CD14-positive monocyte (primary cell): ENCODE measurements at regions of chr10 and their contacts with region 1.

Region 1: DNA sequence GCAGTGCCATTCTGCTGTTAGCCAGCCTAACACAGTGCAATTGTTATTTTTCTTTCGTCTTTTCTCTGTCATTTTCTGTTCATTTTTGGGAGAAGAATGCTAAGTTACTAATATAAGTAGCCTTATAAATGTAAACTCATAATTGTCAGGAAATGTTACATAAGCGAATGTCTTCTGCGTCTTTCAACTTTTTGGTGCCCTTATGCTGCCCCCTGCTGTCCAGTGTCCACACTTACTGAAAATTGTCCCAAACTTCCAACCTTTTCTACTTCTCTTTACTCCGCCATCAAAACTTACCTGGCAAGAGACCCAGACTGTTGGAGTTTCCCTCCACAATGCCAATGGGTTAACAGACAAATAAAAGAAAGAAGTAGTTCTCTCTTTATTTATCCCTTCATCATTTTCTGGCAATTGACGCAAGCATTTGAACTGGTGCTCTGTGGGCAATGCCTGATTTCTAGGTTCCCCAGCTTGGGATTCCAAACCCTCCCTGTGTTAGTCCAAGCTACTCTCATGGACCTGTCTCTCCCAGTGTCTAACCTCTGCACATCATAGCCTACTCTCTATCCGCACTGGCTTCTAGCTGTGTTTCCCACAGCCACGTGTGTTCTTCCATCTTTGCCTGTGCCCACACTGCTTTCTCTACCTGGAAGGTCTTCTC is 21.0 kb upstream of the EPC1 start:
- DNase-seq: peak; percentile 63 to 73 (median 71)
- H3K4me3 ChIP-seq: peak overlapping the region in 1 of 3 experiments; percentile 28
- H3K4me3 Mint-ChIP-seq: no peak overlapping the region
- H3K27ac ChIP-seq: no peak overlapping the region
- H3K27ac Mint-ChIP-seq: peak overlapping the region in 4 of 7 donors; percentile 58 to 80 (median 60)
- H3K4me1 ChIP-seq: peaks cover 3 to 16% of the 10 kb centered on the region in 2 donors
- H3K4me1 Mint-ChIP-seq: peaks cover 22% of the 10 kb centered on the region
- H3K27me3 ChIP-seq: no peaks in the 10 kb centered on the region
- H3K27me3 Mint-ChIP-seq: no peaks in the 10 kb centered on the region
- CTCF ChIP-seq: peak; percentile 89

Region 2: DNA sequence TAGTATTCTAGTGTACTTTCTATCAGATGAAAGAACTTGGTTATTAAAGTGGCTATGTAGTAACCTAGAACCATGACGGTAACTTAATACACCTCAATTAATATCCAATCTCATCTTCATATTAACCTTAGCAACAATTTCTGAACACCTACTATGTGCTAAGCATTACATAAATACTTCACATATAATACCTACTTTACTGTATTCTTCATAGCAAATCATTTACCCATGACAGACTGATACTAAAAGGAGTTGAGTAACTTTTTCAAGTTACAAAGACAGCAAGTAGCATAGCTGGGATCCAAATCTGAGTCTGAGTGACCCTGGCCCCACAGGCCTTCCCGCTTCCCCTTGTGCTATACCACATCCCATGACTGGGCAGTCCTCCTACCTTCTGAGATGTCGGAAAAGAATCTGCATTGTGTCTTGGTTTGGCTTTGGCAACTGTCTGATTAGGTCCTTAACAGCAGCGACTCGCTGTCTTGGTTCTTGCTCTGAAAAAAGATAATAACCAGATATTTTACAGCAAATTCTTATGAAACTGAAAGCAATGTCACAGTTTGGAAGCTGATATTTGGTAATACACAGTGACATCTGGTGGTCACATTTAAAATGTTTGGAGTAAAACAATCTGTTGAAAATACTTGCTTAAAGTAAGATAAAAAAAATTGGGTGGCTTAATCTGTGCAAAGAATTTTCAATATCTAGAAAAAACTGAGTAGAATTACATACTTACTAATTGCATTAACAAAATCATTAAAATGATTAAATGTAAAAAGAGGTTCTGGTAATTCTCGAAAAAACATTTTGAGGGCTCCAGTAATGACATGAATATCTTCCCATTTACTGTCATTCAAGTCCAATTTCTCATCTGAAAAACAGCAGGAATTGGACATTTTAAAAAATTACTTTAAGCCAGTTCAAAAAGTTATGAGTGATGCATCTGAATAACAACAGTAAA is 559.4 kb before region 1 on chr10:
- intact Hi-C with region 1: no loop called
- DNase-seq: peak; percentile 30 to 50 (median 42)
- H3K4me3 ChIP-seq: peak overlapping the region; percentile 49 to 91 (median 72)
- H3K4me3 Mint-ChIP-seq: peak overlapping the region; percentile 67 to 90
- H3K27ac ChIP-seq: peak overlapping the region in 1 of 2 donors; percentile 67
- H3K27ac Mint-ChIP-seq: peak overlapping the region in 6 of 7 donors; percentile 61 to 93 (median 82)
- H3K4me1 ChIP-seq: peaks cover 0 to 3% of the 10 kb centered on the region in 2 donors
- H3K4me1 Mint-ChIP-seq: peaks cover 5% of the 10 kb centered on the region
- H3K27me3 ChIP-seq: no peaks in the 10 kb centered on the region
- H3K27me3 Mint-ChIP-seq: peaks cover 0 to 1% (median 0%) of the 10 kb centered on the region in 3 donors
- CTCF ChIP-seq: peak; percentile 77

Region 3: DNA sequence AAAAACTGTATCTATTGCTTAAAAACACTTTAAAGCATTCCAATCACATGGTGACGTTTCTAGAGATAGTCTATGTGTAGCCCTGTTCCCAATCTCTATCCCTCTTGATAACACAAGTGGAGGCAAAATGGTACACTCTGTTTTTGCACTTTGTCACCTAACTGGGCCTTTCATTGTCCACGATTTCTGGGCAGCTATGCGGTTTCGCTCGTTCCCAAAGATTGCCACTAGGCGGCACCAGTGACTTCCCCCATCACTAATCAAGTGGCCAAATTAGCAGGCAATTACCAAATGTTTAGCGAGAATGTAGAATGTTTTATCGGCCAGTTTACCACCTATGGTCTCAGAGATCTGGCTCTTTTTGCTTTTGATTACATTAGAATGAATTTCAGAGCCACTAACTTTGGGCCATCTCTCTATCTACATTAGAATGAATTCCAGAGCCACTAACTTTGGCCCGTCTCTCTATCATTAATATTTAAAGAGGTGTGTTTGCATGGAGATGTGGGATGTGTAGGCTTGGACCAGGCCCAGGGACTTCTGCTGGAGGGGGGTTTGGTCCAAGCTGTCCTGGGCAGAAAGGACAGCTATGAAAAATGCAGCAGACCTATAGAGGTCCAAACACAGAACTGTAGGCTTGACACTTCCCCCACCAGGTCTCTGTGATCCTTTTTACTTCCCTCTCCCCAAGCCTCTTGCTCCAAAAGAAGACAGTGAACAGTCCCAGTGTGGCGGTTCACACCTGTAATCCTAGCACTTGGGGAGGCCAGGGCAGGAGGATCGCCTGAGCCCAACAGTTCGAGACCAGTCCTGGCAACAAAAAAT is 111.1 kb before region 1 on chr10:
- intact Hi-C with region 1: loop called (anchors 2 to 5 kb)
- DNase-seq: peak; percentile 58 to 69 (median 69)
- H3K4me3 ChIP-seq: no peak overlapping the region
- H3K4me3 Mint-ChIP-seq: peak overlapping the region in 1 of 2 donors; percentile 42
- H3K27ac ChIP-seq: no peak overlapping the region
- H3K27ac Mint-ChIP-seq: peak overlapping the region in 1 of 7 donors; percentile 57
- H3K4me1 ChIP-seq: peaks cover 15 to 17% of the 10 kb centered on the region in 2 donors
- H3K4me1 Mint-ChIP-seq: peaks cover 26% of the 10 kb centered on the region
- H3K27me3 ChIP-seq: no peaks in the 10 kb centered on the region
- H3K27me3 Mint-ChIP-seq: peaks cover 0 to 6% (median 0%) of the 10 kb centered on the region in 3 donors
- CTCF ChIP-seq: peak; percentile 90